ENCODE measurements at regions of chr7 and their contacts with region 1.

Region 1: DNA sequence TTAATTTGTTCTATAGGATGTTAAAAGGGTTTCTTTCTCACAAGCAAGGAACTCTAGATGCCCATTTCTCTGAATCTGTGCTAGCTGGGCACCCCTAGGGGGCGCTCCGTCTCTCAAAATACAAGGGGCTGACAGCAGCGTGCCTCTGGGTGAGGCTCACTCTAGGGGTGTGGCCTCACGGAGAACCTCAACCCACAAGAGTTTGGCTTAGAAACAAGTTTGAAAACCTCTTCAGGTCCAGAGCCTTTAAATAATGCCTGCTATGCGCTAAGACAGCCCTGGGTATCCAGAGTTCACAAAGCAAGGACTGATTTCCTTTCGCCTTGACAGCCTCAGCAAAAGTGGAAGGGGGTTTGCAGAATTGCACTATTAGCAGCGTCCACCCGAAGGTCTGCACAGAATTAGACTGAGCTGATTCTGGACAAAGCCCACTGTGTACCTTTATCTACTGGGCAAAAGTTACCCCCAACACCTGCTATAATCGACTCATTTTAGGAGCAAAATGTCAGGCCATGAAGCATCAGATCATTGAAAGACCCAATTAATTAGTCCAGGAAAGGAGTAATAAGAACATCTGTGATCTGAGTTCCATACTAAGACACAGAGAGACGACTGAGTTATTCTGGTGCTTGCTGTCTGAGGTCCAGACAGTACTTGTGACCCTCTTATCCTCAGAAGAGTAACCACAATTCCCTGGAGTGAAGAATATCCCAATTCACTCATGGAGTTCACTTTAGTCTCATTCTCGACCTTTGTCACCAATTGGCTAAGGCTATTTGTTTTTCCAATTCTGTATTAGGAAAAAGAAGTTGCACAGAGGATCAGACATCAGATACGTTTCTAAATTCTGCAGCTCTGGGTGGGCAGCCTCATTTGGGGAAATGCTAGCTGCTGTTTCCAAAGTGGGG is 574 bp upstream of the CPED1 start:
- DNase-seq: peak; percentile 82 to 90
- H3K4me3 ChIP-seq: peak overlapping the region; percentile 34 to 58 (median 38); a peak in 5 of 8 replicates
- H3K27ac ChIP-seq: no peak overlapping the region
- H3K4me1 ChIP-seq: peaks cover 0 to 4% (median 3%) of the 10 kb centered on the region in 4 experiments; a peak in 4 of 7 replicates
- H3K27me3 ChIP-seq: peaks cover 1 to 20% (median 12%) of the 10 kb centered on the region in 4 experiments; a peak in 6 of 7 replicates
- CTCF ChIP-seq: peak; percentile 78 to 91 (median 86)
- EP300 ChIP-seq: no peak
- POLR2A ChIP-seq: no peak
- RAD21 ChIP-seq: peak; percentile 87 to 93

Region 2: DNA sequence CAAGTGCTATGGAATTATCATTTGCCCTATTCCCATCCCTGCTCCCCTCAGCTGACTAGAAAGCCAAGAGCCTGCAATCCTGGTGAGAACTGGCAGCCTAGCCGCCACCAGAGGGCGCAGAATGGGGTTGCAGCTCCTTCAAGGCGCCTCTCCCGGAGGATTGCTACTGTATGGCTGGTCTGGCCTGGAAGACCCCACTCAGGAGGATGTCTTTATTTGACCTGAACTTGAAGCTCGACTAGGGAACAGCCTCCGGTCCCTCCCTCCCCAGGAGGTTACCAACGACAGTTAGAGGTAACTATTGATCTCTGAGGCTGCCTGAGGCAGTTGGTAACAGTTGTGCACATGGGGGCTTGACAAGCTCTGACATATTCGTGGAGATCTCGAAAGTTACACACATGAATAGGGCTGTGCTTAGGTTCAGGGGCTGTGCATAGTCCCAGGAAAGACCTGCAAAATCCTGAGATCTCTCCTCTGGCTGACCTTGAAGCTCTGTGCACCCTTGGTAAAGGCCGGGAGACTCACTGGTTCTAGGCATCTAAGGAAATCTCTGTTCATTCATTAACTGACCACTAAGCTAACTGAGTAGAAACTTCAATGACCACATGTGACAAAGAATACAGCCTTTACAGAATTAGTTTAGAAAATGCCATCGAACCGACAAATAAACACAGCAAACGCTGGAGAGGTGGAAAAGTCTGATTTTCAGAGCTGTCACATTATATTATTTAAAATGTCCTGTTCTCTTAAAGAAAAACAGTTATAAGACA is 195.7 kb before region 1 on chr7:
- CTCF ChIA-PET with region 1: interaction called, 11 read pairs
- POLR2A ChIA-PET with region 1: no interaction called
- DNase-seq: peak; percentile 67 to 91
- H3K4me3 ChIP-seq: no peak overlapping the region
- H3K27ac ChIP-seq: no peak overlapping the region
- H3K4me1 ChIP-seq: peaks cover 0 to 4% (median 0%) of the 10 kb centered on the region in 4 experiments; a peak in 1 of 7 replicates
- H3K27me3 ChIP-seq: no peaks in the 10 kb centered on the region
- CTCF ChIP-seq: peak; percentile 92 to 97 (median 95)
- EP300 ChIP-seq: no peak
- POLR2A ChIP-seq: no peak
- RAD21 ChIP-seq: peak; percentile 71 to 84

Region 3: GRCh38 chr7:121000081-121000983 is 12.4 kb after region 1 on chr7:
- CTCF ChIA-PET with region 1: interaction called, 16 read pairs
- POLR2A ChIA-PET with region 1: no interaction called
- DNase-seq: no peak
- H3K4me3 ChIP-seq: no peak overlapping the region
- H3K27ac ChIP-seq: no peak overlapping the region
- H3K4me1 ChIP-seq: no peaks in the 10 kb centered on the region
- H3K27me3 ChIP-seq: no peaks in the 10 kb centered on the region
- CTCF ChIP-seq: no peak
- EP300 ChIP-seq: no peak
- POLR2A ChIP-seq: no peak
- RAD21 ChIP-seq: no peak

Region 4: GRCh38 chr7:121069346-121070100 is 81.6 kb after region 1 on chr7:
- CTCF ChIA-PET with region 1: interaction called, 18 read pairs
- POLR2A ChIA-PET with region 1: no interaction called
- DNase-seq: no peak
- H3K4me3 ChIP-seq: no peak overlapping the region
- H3K27ac ChIP-seq: no peak overlapping the region
- H3K4me1 ChIP-seq: no peaks in the 10 kb centered on the region
- H3K27me3 ChIP-seq: no peaks in the 10 kb centered on the region
- CTCF ChIP-seq: no peak
- EP300 ChIP-seq: no peak
- POLR2A ChIP-seq: no peak
- RAD21 ChIP-seq: no peak

Region 5: DNA sequence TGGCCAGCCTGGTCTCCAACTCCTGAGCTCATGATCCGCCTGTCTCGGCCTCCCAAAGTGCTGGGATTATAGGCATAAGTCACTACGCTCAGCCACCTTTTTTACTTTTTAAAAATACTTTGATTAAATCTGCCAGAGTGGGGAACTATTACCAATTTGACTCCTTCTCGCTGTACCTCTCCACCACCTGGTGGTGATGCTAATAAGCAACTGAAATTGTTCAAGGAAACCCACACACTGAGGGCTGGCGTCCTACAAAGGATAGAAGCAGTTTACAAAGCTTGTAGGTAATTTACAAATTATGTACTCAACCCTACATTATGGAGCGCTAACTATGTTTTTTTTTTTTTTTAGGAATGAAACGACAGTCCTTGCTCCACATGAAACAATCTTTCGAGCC is 111.6 kb after region 1 on chr7:
- CTCF ChIA-PET with region 1: interaction called, 86 read pairs
- POLR2A ChIA-PET with region 1: no interaction called
- DNase-seq: no peak
- H3K4me3 ChIP-seq: no peak overlapping the region
- H3K27ac ChIP-seq: no peak overlapping the region
- H3K4me1 ChIP-seq: peaks cover 3 to 18% (median 6%) of the 10 kb centered on the region in 4 experiments; a peak in 5 of 7 replicates
- H3K27me3 ChIP-seq: no peaks in the 10 kb centered on the region
- CTCF ChIP-seq: peak in 2 of 3 experiments; percentile 44 to 46; a peak in 2 of 4 replicates
- EP300 ChIP-seq: no peak
- POLR2A ChIP-seq: no peak
- RAD21 ChIP-seq: peak; percentile 59 to 69